Brain microvascular endothelial cell (primary cell): ENCODE measurements at regions of chr10 and their contacts with region 1.

Region 1: DNA sequence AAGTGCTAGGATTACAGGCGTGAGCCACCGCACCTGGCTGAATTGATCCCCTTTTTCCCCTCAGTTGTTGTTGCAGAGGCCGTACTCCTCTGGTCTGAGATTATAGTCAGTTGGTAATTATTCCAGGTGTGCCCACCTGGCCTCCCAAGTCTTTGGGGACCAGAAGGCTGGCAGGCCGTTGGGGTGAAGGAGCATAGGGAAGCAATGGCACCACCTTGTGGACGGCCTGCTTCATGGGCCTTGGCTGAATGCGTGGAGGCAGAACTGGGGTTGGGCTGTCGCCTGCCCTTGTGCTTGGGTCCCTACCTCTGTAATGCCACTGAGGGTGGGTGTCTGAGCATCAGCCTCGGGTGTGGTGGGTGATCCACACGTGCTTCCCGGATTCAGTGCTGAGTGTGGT is 125.7 kb downstream of the RGS10 start:
- DNase-seq: no peak
- H3K4me3 ChIP-seq: no peak overlapping the region
- H3K27ac ChIP-seq: no peak overlapping the region
- H3K27me3 ChIP-seq: no peaks in the 10 kb centered on the region
- CTCF ChIP-seq: peak; percentile 87

Region 2: GRCh38 chr10:119207367-119207668 is 209.5 kb before region 1 on chr10 and contains the start of gene GRK5:
- in situ Hi-C with region 1: loop called (anchors 25 kb)
- DNase-seq: peak; percentile 93
- H3K4me3 ChIP-seq: peak within 1 kb of the TSS; percentile 86
- H3K27ac ChIP-seq: peak within 1 kb of the TSS; percentile 88
- H3K27me3 ChIP-seq: no peaks in the 10 kb centered on the region
- CTCF ChIP-seq: no peak

Region 3: DNA sequence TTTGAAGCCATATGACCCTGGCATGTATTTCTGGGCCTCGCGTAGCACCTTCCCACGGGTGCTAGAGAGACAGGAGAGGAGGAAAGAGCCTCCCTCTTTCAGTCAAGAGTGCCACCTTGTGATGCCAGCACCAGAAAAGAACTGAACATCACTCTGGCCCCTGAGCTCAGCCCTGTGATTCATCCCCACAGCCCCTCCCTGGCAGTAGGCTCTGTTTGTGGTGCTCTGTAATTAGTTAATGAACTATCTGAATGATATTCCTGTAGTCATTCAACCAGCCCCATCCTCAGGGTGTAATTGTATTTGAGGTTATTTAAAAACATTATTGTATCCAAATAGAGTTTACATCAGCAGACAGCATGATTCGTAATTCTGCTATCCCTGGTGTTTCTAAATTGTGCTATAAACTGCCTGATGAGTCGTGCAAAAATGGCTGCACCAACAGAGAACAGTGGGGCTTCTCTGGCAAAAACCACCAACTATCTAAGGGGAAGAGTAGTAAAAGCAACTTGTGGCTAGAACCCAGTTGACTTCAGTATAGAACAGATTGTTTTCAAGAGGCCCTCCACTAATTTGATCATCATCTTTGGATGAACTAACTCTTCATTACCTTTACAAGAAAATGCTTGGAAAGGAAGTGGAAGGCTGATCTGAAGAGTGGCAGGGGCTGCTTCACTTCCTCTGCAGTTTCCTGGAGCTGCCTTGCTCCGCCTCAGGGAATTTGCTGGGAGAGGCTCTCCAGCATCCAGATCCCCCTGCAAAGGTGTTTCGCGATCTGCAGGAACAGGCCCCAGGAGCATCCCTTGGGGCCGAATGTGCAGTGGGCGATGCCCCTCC is 203.6 kb after region 1 on chr10:
- in situ Hi-C with region 1: no loop called
- DNase-seq: peak; percentile 4
- H3K4me3 ChIP-seq: no peak overlapping the region
- H3K27ac ChIP-seq: no peak overlapping the region
- H3K27me3 ChIP-seq: no peaks in the 10 kb centered on the region
- CTCF ChIP-seq: no peak